ENCODE measurements at regions of chr5 and their contacts with region 1.

Region 1: GRCh38 chr5:129852747-129853352 is 51.4 kb upstream of the CHSY3 start:
- H3K4me3 ChIP-seq: no peak overlapping the region
- H3K27ac ChIP-seq: no peak overlapping the region
- H3K4me1 ChIP-seq: no peaks in the 10 kb centered on the region
- CTCF ChIP-seq: peak; percentile 49; the same call in 1 of the 2 replicates

Region 2: DNA sequence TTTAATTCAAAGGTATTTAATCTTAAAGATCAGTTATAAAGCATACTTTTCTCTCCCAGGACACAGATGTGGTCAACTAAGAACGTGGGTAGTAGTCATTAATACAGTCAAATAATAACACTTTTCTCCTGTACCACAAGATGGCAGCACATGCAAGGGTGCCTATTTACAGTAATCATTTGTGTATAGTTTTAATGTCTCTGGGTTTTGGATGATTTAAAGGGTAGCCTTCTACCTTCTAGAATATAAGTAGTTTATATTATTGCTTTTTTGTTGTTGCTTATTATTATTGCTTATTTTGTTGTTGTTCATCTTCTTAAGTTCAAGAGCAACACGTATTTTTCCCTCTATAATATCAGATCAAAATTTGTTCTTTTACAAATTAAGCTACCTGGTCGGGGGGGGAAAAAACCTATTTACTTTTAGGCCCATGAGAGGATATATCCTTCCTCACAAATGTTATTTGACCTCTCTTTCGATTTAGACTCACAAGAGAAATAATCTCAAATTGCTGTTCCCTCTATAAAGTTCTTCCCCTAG is 947.2 kb before region 1 on chr5:
- CTCF ChIA-PET with region 1: interaction called, 12 read pairs
- POLR2A ChIA-PET with region 1: no interaction called
- H3K4me3 ChIP-seq: no peak overlapping the region
- H3K27ac ChIP-seq: no peak overlapping the region
- H3K4me1 ChIP-seq: no peaks in the 10 kb centered on the region
- CTCF ChIP-seq: no peak

Region 3: DNA sequence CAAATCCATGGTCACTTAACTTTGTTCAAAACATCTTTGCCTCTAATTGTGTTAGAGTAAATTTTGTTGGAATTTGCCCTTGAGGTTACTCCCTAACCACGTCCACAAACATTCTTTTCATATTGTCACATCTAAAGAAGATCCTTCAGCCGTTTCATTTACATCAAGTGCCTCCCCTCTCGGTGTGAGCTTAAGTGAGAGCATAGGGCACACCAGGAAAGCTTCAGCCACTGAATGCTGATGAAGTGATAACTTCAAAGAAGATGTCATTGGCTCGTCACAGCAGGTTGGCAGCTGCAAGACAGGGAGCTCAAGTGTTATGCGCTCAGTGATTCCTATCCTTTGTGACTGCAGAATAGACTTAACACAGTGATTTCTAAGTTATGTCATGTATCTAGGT is 442.4 kb before region 1 on chr5:
- CTCF ChIA-PET with region 1: no interaction called
- POLR2A ChIA-PET with region 1: no interaction called
- H3K4me3 ChIP-seq: no peak overlapping the region
- H3K27ac ChIP-seq: no peak overlapping the region
- H3K4me1 ChIP-seq: peaks cover 4% of the 10 kb centered on the region; the same call in 1 of the 2 replicates
- CTCF ChIP-seq: no peak

Region 4: GRCh38 chr5:129781594-129781993 is 71.3 kb before region 1 on chr5:
- CTCF ChIA-PET with region 1: interaction called, 14 read pairs
- POLR2A ChIA-PET with region 1: no interaction called
- H3K4me3 ChIP-seq: no peak overlapping the region
- H3K27ac ChIP-seq: no peak overlapping the region
- H3K4me1 ChIP-seq: no peaks in the 10 kb centered on the region
- CTCF ChIP-seq: no peak

Region 5: GRCh38 chr5:129804705-129805104 is 48.1 kb before region 1 on chr5:
- CTCF ChIA-PET with region 1: no interaction called
- POLR2A ChIA-PET with region 1: no interaction called
- H3K4me3 ChIP-seq: no peak overlapping the region
- H3K27ac ChIP-seq: no peak overlapping the region
- H3K4me1 ChIP-seq: no peaks in the 10 kb centered on the region
- CTCF ChIP-seq: no peak

Region 6: GRCh38 chr5:129836321-129836720 is 16.5 kb before region 1 on chr5:
- CTCF ChIA-PET with region 1: interaction called, 31 read pairs
- POLR2A ChIA-PET with region 1: no interaction called
- H3K4me3 ChIP-seq: no peak overlapping the region
- H3K27ac ChIP-seq: no peak overlapping the region
- H3K4me1 ChIP-seq: no peaks in the 10 kb centered on the region
- CTCF ChIP-seq: no peak

Measured in HEK293 (cell line).